ENCODE measurements at regions of chr12 and their contacts with region 1.

Region 1: GRCh38 chr12:26734510-26735248 is 98.3 kb downstream of the ITPR2 start:
- DNase-seq: no peak
- H3K4me3 ChIP-seq: no peak overlapping the region
- H3K27ac ChIP-seq: no peak overlapping the region
- H3K4me1 ChIP-seq: peaks cover 6% of the 10 kb centered on the region
- H3K27me3 ChIP-seq: no peaks in the 10 kb centered on the region
- CTCF ChIP-seq: no peak

Region 2: GRCh38 chr12:26399381-26399780 is 335.3 kb before region 1 on chr12:
- CTCF ChIA-PET with region 1: no interaction called
- POLR2A ChIA-PET with region 1: interaction called, 15 read pairs
- intact Hi-C with region 1: no loop called
- DNase-seq: no peak
- H3K4me3 ChIP-seq: no peak overlapping the region
- H3K27ac ChIP-seq: no peak overlapping the region
- H3K4me1 ChIP-seq: no peaks in the 10 kb centered on the region
- H3K27me3 ChIP-seq: no peaks in the 10 kb centered on the region
- CTCF ChIP-seq: no peak